Right ventricle myocardium superior (tissue), 1 donor: ENCODE measurements at regions of chr1 and their contacts with region 1.

Region 1: GRCh38 chr1:78145105-78145580 is 99.4 kb downstream of the GIPC2 start:
- DNase-seq: peak; percentile 44
- ATAC-seq: peak; percentile 89

Region 2: DNA sequence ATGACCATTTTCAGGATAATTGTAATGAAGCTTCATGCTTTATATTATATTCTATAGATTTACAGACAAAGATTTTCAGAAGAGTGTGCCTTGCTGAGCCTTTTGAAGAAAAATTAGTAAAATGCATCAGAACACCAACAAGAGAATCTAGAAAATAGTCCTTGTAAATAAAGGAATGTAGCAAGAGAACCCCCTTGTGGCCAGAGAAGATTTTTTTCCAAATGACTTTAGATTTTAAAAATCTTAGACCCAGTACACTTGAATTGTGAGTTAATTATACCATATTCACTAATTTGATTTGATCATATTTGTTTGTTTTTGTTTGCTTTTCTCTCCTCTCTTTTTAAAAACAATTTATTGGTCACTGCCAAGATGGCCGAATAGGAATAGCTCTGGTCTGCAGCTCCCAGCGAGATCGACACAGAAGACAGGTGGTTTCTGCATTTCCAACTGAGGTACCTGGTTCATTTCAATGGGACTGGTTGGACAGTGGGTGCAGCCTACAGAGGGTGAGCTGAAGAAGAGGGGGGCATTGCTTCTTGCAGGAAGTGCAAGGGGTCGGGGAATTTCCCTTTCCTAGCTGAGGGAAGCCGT is 462.3 kb after region 1 on chr1:
- intact Hi-C with region 1: loop called (anchors 10 kb)
- DNase-seq: no peak
- ATAC-seq: peak; percentile 49